ENCODE measurements at regions of chr20 and their contacts with region 1.

Region 1: DNA sequence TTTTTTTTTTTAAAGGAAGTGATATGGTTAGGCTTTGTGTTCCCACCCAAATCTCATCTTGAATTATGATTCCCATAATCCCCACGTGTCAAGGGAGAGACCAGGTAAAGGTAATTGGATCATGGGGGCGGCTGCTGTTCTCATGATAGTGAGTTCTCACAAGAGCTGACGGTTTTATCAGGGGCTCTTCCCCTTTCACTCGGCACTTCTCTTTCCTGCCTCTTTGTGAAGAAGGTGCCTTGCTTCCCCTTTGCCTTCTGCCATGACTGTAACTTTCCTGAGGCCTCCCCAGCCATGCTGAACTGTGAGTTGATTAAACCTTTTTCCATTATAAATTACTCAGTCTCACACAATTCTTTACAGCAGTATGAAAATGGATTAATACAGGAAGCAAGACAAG is 64.3 kb downstream of the ZFP64 start:
- DNase-seq: no peak
- ATAC-seq: no peak
- H3K4me3 ChIP-seq: no peak overlapping the region
- H3K4me3 Mint-ChIP-seq: no peak overlapping the region
- H3K27ac ChIP-seq: no peak overlapping the region
- H3K27ac Mint-ChIP-seq: no peak overlapping the region
- H3K4me1 ChIP-seq: no peaks in the 10 kb centered on the region
- H3K4me1 Mint-ChIP-seq: peaks cover 5% of the 10 kb centered on the region
- H3K27me3 ChIP-seq: no peaks in the 10 kb centered on the region
- H3K27me3 Mint-ChIP-seq: no peaks in the 10 kb centered on the region
- CTCF ChIP-seq: no peak

Region 2: DNA sequence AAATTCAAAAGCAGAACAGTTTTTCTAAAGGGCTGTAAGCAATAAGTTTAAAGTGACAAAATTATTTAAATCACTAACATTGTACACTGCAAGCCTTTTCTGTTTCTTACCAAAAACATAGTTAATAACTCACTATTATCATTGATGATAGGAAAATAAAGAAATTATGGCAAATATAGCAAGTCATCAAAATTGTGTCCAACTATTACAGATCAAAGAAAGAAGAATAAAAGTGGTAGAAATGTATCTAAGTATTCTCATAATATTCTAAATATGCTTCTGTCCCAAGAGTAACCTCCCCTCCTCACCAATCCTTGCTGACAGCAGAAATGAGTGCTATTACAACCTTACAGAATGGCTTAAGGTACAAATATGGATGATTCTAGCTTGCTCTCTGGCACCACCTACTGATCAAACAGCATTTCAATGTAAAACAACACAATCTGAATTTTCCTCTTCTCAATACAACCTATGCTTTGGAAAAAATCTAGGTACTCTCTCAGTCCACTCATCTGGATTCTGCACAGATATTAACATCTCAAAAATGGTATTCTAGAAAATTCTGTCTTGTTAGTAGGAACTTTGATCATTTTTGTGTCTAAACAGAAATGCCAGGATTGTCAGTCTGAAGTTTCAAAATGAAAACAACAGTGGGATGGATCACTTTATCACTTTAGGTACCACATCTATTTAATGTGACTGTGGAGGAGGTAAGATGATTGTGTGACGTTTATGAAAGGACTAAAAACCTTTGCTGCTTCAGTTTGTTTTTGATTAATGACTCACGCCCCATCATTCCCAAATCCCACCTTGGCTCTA is 23.3 kb after region 1 on chr20:
- CTCF ChIA-PET with region 1: interaction called, 16 read pairs
- POLR2A ChIA-PET with region 1: no interaction called
- intact Hi-C with region 1: loop called (anchors 1 kb)
- DNase-seq: peak; percentile 44
- ATAC-seq: peak; percentile 39
- H3K4me3 ChIP-seq: no peak overlapping the region
- H3K4me3 Mint-ChIP-seq: no peak overlapping the region
- H3K27ac ChIP-seq: no peak overlapping the region
- H3K27ac Mint-ChIP-seq: no peak overlapping the region
- H3K4me1 ChIP-seq: no peaks in the 10 kb centered on the region
- H3K4me1 Mint-ChIP-seq: no peaks in the 10 kb centered on the region
- H3K27me3 ChIP-seq: no peaks in the 10 kb centered on the region
- H3K27me3 Mint-ChIP-seq: no peaks in the 10 kb centered on the region
- CTCF ChIP-seq: peak; percentile 94